ENCODE measurements at regions of chr9 and their contacts with region 1.

Region 1: GRCh38 chr9:38178237-38178636 is 109.2 kb upstream of the SHB start:
- DNase-seq: no peak
- H3K4me3 ChIP-seq: no peak overlapping the region
- H3K27ac ChIP-seq: no peak overlapping the region
- H3K4me1 ChIP-seq: no peaks in the 10 kb centered on the region
- CTCF ChIP-seq: no peak

Region 2: DNA sequence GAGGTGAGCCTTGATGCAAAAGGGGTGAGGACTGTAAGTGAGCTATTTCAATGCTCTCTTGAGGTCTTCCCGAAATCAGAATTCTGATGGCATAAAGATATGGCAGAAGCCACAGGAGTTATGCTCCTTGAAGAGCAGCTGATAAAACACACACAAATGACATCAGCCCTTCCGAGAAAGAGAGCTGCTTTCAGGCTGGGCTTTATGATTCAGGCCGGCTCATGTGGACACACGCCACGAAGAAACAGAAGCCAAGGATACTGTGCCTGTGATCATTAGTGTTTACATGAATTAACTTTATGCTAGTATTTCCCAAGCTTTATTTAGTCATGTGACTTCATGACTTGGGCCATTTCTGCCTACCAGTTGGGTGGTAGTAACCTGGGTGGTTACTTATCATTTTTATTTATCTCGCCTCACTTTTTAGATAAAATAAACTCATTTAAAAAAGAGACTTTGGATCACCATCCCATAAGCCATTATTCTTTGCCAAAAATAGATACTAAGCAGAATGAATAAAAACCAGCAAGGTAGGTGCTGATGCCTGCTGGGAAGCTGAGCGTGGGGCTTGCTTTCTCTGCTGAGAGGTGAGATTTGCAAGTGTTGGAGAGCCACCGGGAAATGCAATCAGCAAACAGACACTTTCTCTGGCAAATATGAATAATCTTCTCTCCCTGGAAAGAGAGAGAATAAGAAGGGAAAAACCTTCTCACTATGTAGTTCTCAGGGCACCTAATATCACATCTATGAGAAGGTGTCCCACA is 201.3 kb before region 1 on chr9:
- CTCF ChIA-PET with region 1: no interaction called
- POLR2A ChIA-PET with region 1: no interaction called
- intact Hi-C with region 1: no loop called
- DNase-seq: no peak
- H3K4me3 ChIP-seq: no peak overlapping the region
- H3K27ac ChIP-seq: no peak overlapping the region
- H3K4me1 ChIP-seq: no peaks in the 10 kb centered on the region
- CTCF ChIP-seq: no peak

Region 3: GRCh38 chr9:38227061-38227540 is 48.9 kb after region 1 on chr9:
- CTCF ChIA-PET with region 1: no interaction called
- POLR2A ChIA-PET with region 1: no interaction called
- intact Hi-C with region 1: loop called (anchors 5 kb)
- DNase-seq: peak; percentile 93
- H3K4me3 ChIP-seq: peak overlapping the region; percentile 60
- H3K27ac ChIP-seq: peak overlapping the region; percentile 45
- H3K4me1 ChIP-seq: peaks cover 55% of the 10 kb centered on the region
- CTCF ChIP-seq: no peak

Measured in OCI-LY7 (cell line).